Activated CD4-positive, alpha-beta memory T cell treated with anti-CD3 and anti-CD28 coated beads for 36 hours (primary cell): ENCODE measurements at regions of chr9 and their contacts with region 1.

Region 1: DNA sequence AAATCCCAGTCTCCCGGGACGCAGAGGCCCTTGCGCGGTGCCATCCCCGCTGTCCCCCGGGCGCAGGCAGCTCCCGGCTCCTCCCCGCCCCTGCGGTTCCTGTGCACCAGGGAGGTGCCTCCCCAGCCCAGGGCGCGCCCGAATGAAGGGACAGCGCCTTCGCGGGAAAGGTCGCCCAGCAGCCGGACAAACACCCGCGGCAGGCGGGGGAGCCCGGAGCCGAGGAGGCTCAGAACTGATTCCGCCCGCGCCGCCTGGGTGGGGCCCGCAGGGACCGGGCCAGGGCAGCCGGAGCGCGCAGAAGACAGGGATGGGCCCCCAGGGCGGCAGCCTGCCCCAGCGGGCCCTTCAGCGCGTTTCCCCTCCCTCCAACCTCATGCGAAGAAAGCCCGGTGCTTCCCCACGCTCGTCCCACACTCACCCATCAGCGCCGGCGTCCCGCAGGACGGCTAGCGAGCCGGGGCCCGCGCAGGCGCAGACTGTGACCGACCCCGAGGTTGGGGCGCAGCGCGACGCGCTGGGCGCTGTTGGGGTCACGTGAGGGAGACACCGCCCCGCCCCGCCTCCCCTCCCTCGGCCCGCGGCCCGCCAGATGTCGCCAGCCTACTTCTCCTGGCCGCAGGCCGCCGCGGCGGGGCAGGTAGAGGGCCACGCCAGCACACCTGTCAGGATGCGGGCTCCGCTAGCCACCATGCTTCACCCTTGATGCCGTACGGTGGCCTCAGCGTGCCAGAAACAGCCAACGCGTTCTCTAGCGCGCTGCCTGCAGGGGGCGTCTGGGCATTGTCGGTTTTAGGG is at the start of gene SLC25A51:
- DNase-seq: peak; percentile 97
- H3K4me3 Mint-ChIP-seq: peak within 1 kb of the TSS; percentile 84
- H3K27ac Mint-ChIP-seq: peak within 1 kb of the TSS; percentile 87
- H3K4me1 Mint-ChIP-seq: peaks cover 19% of the 10 kb centered on the region
- H3K27me3 Mint-ChIP-seq: no peaks in the 10 kb centered on the region
- total RNA-seq, gene SLC25A51: 24.0 to 25.8 TPM

Region 2: GRCh38 chr9:37485389-37486219 is 418.2 kb before region 1 on chr9 and contains the start of gene POLR1E:
- CTCF ChIA-PET with region 1: no interaction called
- POLR2A ChIA-PET with region 1: interaction called, 4 read pairs
- intact Hi-C with region 1: loop called (anchors 5 kb)
- DNase-seq: peak; percentile 97
- H3K4me3 Mint-ChIP-seq: peak within 1 kb of the TSS; percentile 88
- H3K27ac Mint-ChIP-seq: peak within 1 kb of the TSS; percentile 91
- H3K4me1 Mint-ChIP-seq: peaks cover 35% of the 10 kb centered on the region
- H3K27me3 Mint-ChIP-seq: peaks cover 6% of the 10 kb centered on the region
- total RNA-seq, gene POLR1E: 56.7 to 58.0 TPM

Region 3: GRCh38 chr9:37753489-37754190 is 150.2 kb before region 1 on chr9 and contains the start of gene TRMT10B:
- CTCF ChIA-PET with region 1: no interaction called
- POLR2A ChIA-PET with region 1: interaction called, 3 read pairs
- intact Hi-C with region 1: loop called (anchors 1 kb)
- DNase-seq: peak; percentile 83
- H3K4me3 Mint-ChIP-seq: peak within 1 kb of the TSS; percentile 96
- H3K27ac Mint-ChIP-seq: peak within 1 kb of the TSS; percentile 88
- H3K4me1 Mint-ChIP-seq: peaks cover 23% of the 10 kb centered on the region
- H3K27me3 Mint-ChIP-seq: no peaks in the 10 kb centered on the region
- total RNA-seq, gene TRMT10B: 8.7 to 11.5 TPM

Region 4: GRCh38 chr9:37800631-37801286 is 103.1 kb before region 1 on chr9 and contains the start of gene DCAF10:
- CTCF ChIA-PET with region 1: interaction called, 3 read pairs
- POLR2A ChIA-PET with region 1: interaction called, 5 read pairs
- intact Hi-C with region 1: loop called (anchors 5 kb)
- DNase-seq: peak; percentile 92
- H3K4me3 Mint-ChIP-seq: peak within 1 kb of the TSS; percentile 93
- H3K27ac Mint-ChIP-seq: peak within 1 kb of the TSS; percentile 85
- H3K4me1 Mint-ChIP-seq: peaks cover 40% of the 10 kb centered on the region
- H3K27me3 Mint-ChIP-seq: no peaks in the 10 kb centered on the region
- total RNA-seq, gene DCAF10: 13.8 to 17.2 TPM

Region 5: GRCh38 chr9:38068866-38069629 is 165.2 kb after region 1 on chr9 and contains the start of gene SHB:
- CTCF ChIA-PET with region 1: interaction called, 4 read pairs
- POLR2A ChIA-PET with region 1: no interaction called
- intact Hi-C with region 1: loop called (anchors 2 kb)
- DNase-seq: peak; percentile 85
- H3K4me3 Mint-ChIP-seq: peak within 1 kb of the TSS; percentile 68
- H3K27ac Mint-ChIP-seq: no peak within 1 kb of the TSS
- H3K4me1 Mint-ChIP-seq: peaks cover 19% of the 10 kb centered on the region
- H3K27me3 Mint-ChIP-seq: peaks cover 6% of the 10 kb centered on the region
- total RNA-seq, gene SHB: 1.1 to 1.2 TPM

Region 6: GRCh38 chr9:38117651-38118050 is 213.8 kb after region 1 on chr9:
- CTCF ChIA-PET with region 1: no interaction called
- POLR2A ChIA-PET with region 1: no interaction called
- intact Hi-C with region 1: no loop called
- DNase-seq: no peak
- H3K4me3 Mint-ChIP-seq: no peak overlapping the region
- H3K27ac Mint-ChIP-seq: no peak overlapping the region
- H3K4me1 Mint-ChIP-seq: no peaks in the 10 kb centered on the region
- H3K27me3 Mint-ChIP-seq: peaks cover 12% of the 10 kb centered on the region